Sciatic nerve (tissue), 2 donors: ENCODE measurements at regions of chr6 and their contacts with region 1.

Region 1: GRCh38 chr6:125114248-125114858 is 39.2 kb upstream of the TPD52L1 start:
- DNase-seq: peak; percentile 77
- ATAC-seq: no peak

Region 2: DNA sequence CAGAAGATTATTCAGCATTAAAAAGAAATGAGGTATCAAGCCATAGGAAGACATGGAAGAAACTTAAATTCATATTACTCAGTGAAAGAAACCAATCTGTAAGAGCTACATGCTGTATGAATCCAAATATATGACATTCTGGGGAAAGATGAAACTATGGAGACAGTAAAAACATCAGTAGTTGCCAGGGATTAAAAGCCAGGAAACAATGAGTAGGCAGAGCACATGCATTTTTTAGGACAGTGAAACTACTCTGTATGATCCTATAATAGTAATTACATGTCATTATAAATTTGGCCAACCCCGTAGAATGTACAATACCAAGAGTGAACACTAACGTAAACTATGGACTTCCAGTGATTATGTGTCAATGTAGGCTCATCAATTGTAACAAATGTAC is 244.9 kb before region 1 on chr6:
- intact Hi-C with region 1: loop called (anchors 5 kb)
- DNase-seq: no peak
- ATAC-seq: no peak